Spleen (tissue), 13 donors: ENCODE measurements at regions of chr4 and their contacts with region 1.

Region 1: DNA sequence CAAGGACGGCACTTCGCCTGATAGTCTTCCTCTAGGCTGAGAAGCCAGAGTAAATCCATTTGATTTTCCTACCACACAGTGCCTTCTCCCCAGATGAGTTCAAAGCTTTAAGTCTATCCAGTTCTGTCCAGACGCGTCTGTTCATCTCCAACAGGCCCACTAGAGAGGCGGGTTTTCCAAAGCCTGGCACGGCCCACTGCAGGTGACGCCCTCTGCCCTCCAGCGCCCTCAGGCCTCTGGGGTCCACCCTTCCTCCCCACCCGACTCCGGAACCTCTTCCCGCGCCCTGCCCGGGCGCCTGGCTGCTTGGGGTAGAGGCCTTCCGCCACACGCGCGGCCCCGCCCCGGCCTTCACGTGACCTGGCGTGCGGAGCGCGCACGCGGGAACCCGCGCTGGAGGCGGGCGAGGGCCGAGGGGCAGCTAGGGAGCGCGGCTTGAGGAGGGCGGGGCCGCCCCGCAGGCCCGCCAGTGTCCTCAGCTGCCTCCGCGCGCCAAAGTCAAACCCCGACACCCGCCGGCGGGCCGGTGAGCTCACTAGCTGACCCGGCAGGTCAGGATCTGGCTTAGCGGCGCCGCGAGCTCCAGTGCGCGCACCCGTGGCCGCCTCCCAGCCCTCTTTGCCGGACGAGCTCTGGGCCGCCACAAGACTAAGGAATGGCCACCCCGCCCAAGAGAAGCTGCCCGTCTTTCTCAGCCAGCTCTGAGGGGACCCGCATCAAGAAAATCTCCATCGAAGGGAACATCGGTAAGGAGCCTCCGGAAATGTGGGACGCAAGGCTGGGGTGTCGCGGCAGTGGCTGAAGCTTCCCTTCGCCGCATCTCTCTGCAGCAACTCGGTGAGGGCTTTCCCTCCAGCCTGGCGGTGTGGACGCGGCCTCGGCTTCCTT is at the start of gene DCK:
- DNase-seq: peak; percentile 99
- H3K4me3 ChIP-seq: peak within 1 kb of the TSS; percentile 79 to 95 (median 90)
- H3K27ac ChIP-seq: peak within 1 kb of the TSS; percentile 81 to 95 (median 92)
- H3K4me1 ChIP-seq: peaks cover 16 to 59% (median 52%) of the 10 kb centered on the region in 6 donors
- H3K27me3 ChIP-seq: no peaks in the 10 kb centered on the region
- CTCF ChIP-seq: peak in 3 of 11 experiments; percentile 6 to 25 (median 20)
- POLR2A ChIP-seq: peak in 2 of 3 donors; percentile 36 to 39
- total RNA-seq, gene DCK: 25.4 to 45.5 (median 34.7) TPM

Region 2: DNA sequence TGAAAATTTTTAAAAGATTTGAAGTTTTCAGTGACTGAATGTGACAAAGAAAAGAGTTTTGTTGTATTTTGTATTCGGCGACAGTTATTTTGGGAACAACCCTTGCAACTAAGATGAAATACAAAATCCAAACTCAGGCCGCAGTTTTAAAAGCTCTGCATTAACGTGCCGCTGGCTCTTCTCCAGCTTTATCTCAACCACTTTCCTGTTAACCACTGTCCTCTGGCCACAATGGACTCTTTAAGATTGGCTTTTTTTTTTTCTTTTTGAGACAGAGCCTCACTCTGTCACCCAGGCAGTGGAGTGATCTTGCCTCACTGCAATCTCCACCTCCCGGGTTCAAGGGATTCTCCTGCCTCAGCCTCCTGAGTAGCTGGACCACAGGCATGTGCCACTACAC is 497.2 kb before region 1 on chr4:
- intact Hi-C with region 1: no loop called
- DNase-seq: no peak
- H3K4me3 ChIP-seq: no peak overlapping the region
- H3K27ac ChIP-seq: no peak overlapping the region
- H3K4me1 ChIP-seq: no peaks in the 10 kb centered on the region
- H3K27me3 ChIP-seq: peaks cover 0 to under 1% (median 0%) of the 10 kb centered on the region in 7 donors
- CTCF ChIP-seq: no peak
- POLR2A ChIP-seq: no peak

Region 3: GRCh38 chr4:70637239-70637913 is 356.0 kb before region 1 on chr4:
- intact Hi-C with region 1: no loop called
- DNase-seq: no peak
- H3K4me3 ChIP-seq: no peak overlapping the region
- H3K27ac ChIP-seq: peak overlapping the region in 3 of 8 donors; percentile 9 to 47 (median 27)
- H3K4me1 ChIP-seq: no peaks in the 10 kb centered on the region
- H3K27me3 ChIP-seq: no peaks in the 10 kb centered on the region
- CTCF ChIP-seq: no peak
- POLR2A ChIP-seq: no peak

Region 4: DNA sequence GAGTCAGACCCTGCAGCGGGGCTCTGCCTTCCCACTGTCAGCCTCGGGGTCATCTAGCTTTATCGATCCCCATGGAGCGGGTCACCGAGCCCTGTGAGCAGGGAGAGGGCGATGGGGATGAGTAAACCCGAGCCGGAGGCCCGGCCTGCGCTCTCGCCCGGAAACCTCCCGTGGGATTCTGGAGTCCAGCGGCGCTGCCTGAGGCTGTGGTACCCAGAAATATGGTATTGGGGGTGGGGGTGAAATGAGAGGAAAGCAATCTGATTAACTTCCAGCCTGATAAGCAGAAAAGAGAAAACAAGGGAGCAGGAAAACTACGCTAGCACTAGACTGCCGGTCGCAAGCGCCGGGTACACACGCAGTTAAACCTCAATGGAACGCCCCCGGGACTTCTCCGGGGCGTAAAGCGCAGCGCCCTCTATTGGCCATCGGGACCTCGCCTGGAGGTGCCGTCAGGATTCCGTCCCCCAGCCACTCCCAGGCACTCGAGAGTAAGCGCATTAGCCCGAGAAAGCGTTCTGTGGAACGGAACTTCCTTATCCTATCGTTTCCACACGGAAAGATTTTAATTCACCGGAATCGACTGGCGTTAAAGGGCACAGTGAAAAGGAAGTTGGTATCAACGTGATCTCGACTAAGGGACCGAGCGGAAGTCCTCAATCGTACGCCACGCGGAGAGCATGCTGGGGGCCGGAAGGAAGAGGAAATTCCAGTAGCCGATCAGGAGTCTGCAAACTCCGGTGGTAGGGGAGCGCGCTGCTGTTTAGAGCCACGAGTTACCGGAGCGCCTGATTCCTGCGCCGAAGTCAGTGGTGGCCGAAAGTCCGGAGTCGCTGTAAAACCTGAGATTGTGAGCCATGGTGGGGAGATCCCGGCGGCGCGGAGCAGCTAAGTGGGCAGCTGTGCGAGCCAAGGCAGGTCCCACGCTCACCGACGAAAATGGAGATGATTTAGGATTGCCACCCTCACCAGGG is 305.3 kb before region 1 on chr4 and contains the start of gene UTP3:
- intact Hi-C with region 1: loop called (anchors 10 kb)
- DNase-seq: peak; percentile 97
- H3K4me3 ChIP-seq: peak within 1 kb of the TSS; percentile 73 to 84 (median 82)
- H3K27ac ChIP-seq: peak within 1 kb of the TSS; percentile 89 to 99 (median 92)
- H3K4me1 ChIP-seq: peaks cover 26 to 56% (median 49%) of the 10 kb centered on the region in 6 donors
- H3K27me3 ChIP-seq: no peaks in the 10 kb centered on the region
- CTCF ChIP-seq: peak; percentile 83 to 99 (median 97)
- POLR2A ChIP-seq: peak in 1 of 3 donors; percentile 26
- total RNA-seq, gene UTP3: 29.0 to 45.1 (median 37.6) TPM

Region 5: DNA sequence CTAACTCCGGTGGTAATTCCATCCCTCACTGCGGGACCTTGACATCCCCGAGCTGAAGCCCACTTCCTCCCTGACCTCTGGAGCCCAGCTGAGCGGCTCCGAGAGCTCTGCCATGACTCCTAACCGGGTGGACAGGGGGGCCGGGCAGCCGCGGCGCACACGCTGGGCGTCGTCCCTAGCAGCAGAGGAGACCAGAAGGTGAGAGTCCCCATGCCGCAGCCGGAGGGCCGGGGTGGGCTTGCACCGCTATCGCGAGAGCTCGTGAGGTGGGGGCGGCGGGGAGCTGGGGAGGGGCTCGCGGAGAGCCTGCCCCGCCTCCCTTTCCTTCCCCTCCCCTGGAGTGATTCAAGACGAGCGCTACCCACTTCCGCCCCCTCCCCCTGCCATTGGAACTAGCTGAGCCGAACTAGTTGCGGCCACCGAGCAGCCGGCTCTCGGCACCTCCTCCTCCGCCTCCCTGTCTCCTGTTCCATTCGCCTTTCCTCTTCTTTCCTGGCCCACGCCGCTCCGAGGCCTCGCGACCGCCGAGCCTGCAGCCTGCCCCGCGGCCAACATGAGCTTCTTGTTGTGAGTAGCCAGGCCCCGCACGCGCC is 91.3 kb before region 1 on chr4 and contains the start of gene MOB1B:
- intact Hi-C with region 1: loop called (anchors 5 kb)
- DNase-seq: peak; percentile 96
- H3K4me3 ChIP-seq: peak within 1 kb of the TSS; percentile 74 to 92 (median 78)
- H3K27ac ChIP-seq: peak within 1 kb of the TSS; percentile 30 to 91 (median 84)
- H3K4me1 ChIP-seq: peaks cover 7 to 38% (median 22%) of the 10 kb centered on the region in 6 donors
- H3K27me3 ChIP-seq: no peaks in the 10 kb centered on the region
- CTCF ChIP-seq: peak in 10 of 11 experiments; percentile 11 to 66 (median 49)
- POLR2A ChIP-seq: no peak
- total RNA-seq, gene MOB1B: 20.2 to 29.6 (median 24.4) TPM

Region 6: DNA sequence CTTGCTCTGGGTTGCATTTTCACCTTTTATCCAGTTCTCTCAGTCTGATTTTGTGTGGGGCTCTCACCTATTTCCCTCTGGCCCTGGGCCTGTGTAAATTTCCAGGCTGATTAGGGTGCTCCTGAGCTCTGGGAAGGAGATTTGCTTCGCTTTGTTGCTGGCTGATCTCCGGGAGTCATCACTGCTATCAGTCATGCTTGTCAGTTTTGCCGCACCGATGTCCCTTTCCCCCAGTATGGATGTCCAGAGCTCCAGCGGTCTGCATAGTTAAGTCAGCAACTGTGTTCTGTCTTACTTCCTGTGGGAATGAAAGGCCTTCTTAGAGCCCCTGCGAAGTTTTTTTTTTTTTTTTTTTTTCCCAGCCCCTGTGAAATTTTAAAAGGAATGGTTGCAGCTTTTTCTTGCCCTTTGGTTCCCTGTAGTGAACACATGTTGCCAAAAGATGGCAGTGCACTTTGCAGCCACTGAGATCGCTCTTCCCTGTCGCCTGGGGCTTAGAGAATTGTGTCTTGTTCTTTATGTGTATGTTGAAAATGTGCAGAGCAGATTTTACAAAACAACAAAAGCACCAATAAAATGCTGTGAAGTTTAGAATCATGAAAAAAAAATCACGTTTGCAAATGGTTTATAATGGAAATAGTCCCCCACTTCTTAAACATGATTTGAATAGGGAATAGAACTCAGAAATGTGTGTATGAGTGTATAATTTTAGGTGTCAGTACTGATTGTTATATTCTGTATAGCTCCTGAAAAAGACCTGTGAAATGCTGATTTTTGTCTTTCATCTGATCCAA is 236.2 kb after region 1 on chr4:
- intact Hi-C with region 1: no loop called
- DNase-seq: no peak
- H3K4me3 ChIP-seq: no peak overlapping the region
- H3K27ac ChIP-seq: no peak overlapping the region
- H3K4me1 ChIP-seq: peaks cover 0 to 16% (median 0%) of the 10 kb centered on the region in 6 donors
- H3K27me3 ChIP-seq: no peaks in the 10 kb centered on the region
- CTCF ChIP-seq: peak in 10 of 11 experiments; percentile 26 to 69 (median 43)
- POLR2A ChIP-seq: no peak

Region 7: GRCh38 chr4:72169861-72170260 is 1176.4 kb after region 1 on chr4:
- intact Hi-C with region 1: no loop called
- DNase-seq: no peak
- H3K4me3 ChIP-seq: no peak overlapping the region
- H3K27ac ChIP-seq: no peak overlapping the region
- H3K4me1 ChIP-seq: no peaks in the 10 kb centered on the region
- H3K27me3 ChIP-seq: no peaks in the 10 kb centered on the region
- CTCF ChIP-seq: no peak
- POLR2A ChIP-seq: no peak